Activated CD4-positive, alpha-beta T cell treated with anti-CD3 and anti-CD28 coated beads, Interleukin-2, amount 10 ng/mL, durations not matched to agents 24 days and 14 days (primary cell): ENCODE measurements at regions of chr6 and their contacts with region 1.

Region 1: DNA sequence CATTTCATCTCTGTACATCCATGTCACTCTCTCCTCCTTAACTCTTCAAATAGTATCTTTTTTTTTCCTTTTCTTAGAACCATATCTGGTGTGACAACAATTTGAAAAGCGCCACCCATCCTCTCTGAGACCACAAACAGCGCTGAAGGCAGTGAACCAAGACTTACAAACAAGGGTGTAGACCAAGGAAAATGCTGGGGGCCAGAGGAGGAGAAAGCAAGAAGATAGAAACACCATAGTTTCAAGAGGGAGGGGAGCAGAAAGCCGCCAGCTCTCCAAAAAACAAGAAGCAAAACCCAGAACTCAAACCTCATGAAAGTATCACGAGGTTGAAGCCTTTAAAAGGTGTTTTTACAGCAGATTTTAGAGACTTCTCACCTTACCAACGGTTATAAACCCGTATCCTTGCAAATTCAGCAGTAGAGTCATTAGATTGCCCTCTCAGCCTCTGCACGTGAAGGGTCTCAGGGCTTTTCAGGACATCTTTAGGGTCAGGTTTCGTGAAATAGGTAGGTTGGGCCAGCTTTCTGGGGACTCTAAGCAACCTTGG is 13.3 kb upstream of the RIPOR2 start:
- DNase-seq: peak; percentile 92
- H3K4me3 Mint-ChIP-seq: peak overlapping the region; percentile 63
- H3K27ac Mint-ChIP-seq: peak overlapping the region; percentile 91
- H3K4me1 Mint-ChIP-seq: peaks cover 71% of the 10 kb centered on the region
- H3K27me3 Mint-ChIP-seq: no peaks in the 10 kb centered on the region

Region 2: GRCh38 chr6:24019830-24020229 is 929.3 kb before region 1 on chr6:
- intact Hi-C with region 1: no loop called
- DNase-seq: no peak
- H3K4me3 Mint-ChIP-seq: no peak overlapping the region
- H3K27ac Mint-ChIP-seq: no peak overlapping the region
- H3K4me1 Mint-ChIP-seq: no peaks in the 10 kb centered on the region
- H3K27me3 Mint-ChIP-seq: no peaks in the 10 kb centered on the region

Region 3: GRCh38 chr6:24927985-24928745 is 20.9 kb before region 1 on chr6:
- intact Hi-C with region 1: loop called (anchors 1 kb)
- DNase-seq: no peak
- H3K4me3 Mint-ChIP-seq: peak overlapping the region; percentile 94
- H3K27ac Mint-ChIP-seq: peak overlapping the region; percentile 99
- H3K4me1 Mint-ChIP-seq: peaks cover 76% of the 10 kb centered on the region
- H3K27me3 Mint-ChIP-seq: no peaks in the 10 kb centered on the region

Region 4: DNA sequence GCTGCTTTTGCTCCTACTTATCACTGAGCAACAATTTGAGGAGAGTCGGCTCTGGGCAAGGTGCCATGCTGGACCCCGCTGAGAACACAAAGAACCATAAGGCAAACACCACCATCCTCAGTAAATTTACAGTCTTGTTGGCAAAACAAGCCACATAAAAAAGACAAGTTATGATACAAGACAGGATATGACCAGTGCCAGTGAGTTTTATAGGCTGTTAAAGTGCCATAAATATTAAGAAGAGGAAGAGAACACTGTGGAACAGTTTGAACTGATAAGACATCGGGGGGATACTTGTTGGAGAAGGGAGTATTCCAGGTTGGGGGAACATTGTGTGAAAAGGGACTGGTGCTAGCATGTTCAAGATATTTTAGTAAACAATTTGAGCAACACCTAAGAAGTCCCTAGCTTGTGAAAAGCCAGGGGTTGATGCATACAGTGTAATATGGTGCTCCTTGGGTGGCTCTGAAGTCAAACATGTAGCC is 11.9 kb after region 1 on chr6:
- intact Hi-C with region 1: loop called (anchors 1 kb)
- DNase-seq: no peak
- H3K4me3 Mint-ChIP-seq: peak overlapping the region; percentile 47
- H3K27ac Mint-ChIP-seq: peak overlapping the region; percentile 80
- H3K4me1 Mint-ChIP-seq: peaks cover 49% of the 10 kb centered on the region
- H3K27me3 Mint-ChIP-seq: no peaks in the 10 kb centered on the region

Region 5: DNA sequence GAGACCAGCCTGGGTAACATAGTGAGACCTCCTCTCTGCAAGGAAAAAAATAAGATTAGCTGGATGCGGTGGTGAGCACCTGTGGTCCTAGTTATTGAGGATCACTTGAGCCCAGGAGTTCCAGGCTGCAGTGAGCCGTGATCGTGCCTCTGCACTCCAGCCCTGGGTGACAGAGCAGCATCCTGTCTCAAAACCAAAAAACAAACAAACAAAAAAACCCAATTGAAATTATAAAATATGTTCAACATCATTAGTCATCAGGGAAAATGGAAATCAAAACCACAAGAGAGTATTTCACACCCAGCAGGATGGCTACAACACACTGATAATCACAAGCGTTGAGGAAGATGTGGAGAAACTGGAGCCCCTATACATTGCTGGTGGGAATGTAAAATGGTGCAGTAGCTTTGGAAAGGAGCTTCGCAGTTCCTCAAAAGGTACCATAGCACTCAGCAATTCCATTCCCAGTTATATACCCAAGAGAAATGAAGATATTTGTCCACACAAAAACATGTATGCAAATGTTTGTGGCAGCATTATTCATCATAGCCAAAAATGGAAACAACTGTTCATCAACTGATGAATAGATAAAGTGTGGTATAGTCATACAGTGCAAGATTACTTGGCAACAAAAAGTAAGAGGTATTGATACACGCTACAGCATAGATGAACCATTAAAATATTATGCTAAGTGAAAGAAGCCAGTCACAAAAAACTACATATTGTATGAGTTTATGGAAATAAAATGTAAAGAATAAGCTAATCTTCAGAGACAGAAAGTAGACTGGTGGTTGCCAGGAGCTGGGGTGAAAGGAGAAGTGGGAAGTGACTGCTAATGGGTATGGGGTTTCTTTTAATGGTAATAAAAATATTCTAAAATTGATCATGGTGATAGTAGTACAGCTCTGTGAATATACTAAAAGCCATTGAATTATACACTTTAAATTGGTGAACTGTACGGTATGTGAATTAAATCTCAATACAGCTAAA is 25.4 kb after region 1 on chr6:
- intact Hi-C with region 1: loop called (anchors 1 kb)
- DNase-seq: peak; percentile 71
- H3K4me3 Mint-ChIP-seq: peak overlapping the region; percentile 60
- H3K27ac Mint-ChIP-seq: peak overlapping the region; percentile 91
- H3K4me1 Mint-ChIP-seq: peaks cover 31% of the 10 kb centered on the region
- H3K27me3 Mint-ChIP-seq: no peaks in the 10 kb centered on the region

Region 6: GRCh38 chr6:25801436-25801835 is 852.3 kb after region 1 on chr6:
- intact Hi-C with region 1: no loop called
- DNase-seq: no peak
- H3K4me3 Mint-ChIP-seq: no peak overlapping the region
- H3K27ac Mint-ChIP-seq: no peak overlapping the region
- H3K4me1 Mint-ChIP-seq: no peaks in the 10 kb centered on the region
- H3K27me3 Mint-ChIP-seq: peaks cover 35% of the 10 kb centered on the region